ENCODE measurements at regions of chr19 and their contacts with region 1.

Region 1: GRCh38 chr19:40633207-40633606 is 32.0 kb downstream of the LTBP4 start:
- DNase-seq: no peak
- H3K4me3 ChIP-seq: no peak overlapping the region
- H3K27ac ChIP-seq: no peak overlapping the region
- H3K4me1 ChIP-seq: no peaks in the 10 kb centered on the region
- H3K27me3 ChIP-seq: no peaks in the 10 kb centered on the region
- CTCF ChIP-seq: no peak

Region 2: GRCh38 chr19:40190891-40191835 is 442.0 kb before region 1 on chr19 and contains the start of gene MAP3K10:
- CTCF ChIA-PET with region 1: no interaction called
- dilution Hi-C with region 1: no loop called
- in situ Hi-C with region 1: no loop called
- intact Hi-C with region 1: no loop called
- DNase-seq: peak; percentile 45
- H3K4me3 ChIP-seq: peak within 1 kb of the TSS; percentile 70 to 73 (median 72)
- H3K27ac ChIP-seq: peak within 1 kb of the TSS; percentile 24
- H3K4me1 ChIP-seq: peaks cover 9% of the 10 kb centered on the region
- H3K27me3 ChIP-seq: no peaks in the 10 kb centered on the region
- CTCF ChIP-seq: no peak
- total RNA-seq, gene MAP3K10: 7.8 to 16.0 TPM

Region 3: GRCh38 chr19:40348125-40348913 is 284.9 kb before region 1 on chr19 and contains the starts of genes C19orf47 and PLD3:
- CTCF ChIA-PET with region 1: no interaction called
- dilution Hi-C with region 1: no loop called
- in situ Hi-C with region 1: no loop called
- intact Hi-C with region 1: no loop called
- DNase-seq: peak; percentile 99
- H3K4me3 ChIP-seq: peak within 1 kb of the TSS; percentile 78 to 93 (median 86)
- H3K27ac ChIP-seq: peak within 1 kb of the TSS; percentile 74
- H3K4me1 ChIP-seq: peaks cover 9% of the 10 kb centered on the region
- H3K27me3 ChIP-seq: no peaks in the 10 kb centered on the region
- CTCF ChIP-seq: no peak
- total RNA-seq, gene C19orf47: 19.9 to 20.3 TPM
- total RNA-seq, gene PLD3: 146 to 293 TPM

Region 4: GRCh38 chr19:40529093-40529954 is 103.9 kb before region 1 on chr19:
- CTCF ChIA-PET with region 1: interaction called, 4 read pairs
- dilution Hi-C with region 1: no loop called
- in situ Hi-C with region 1: no loop called
- intact Hi-C with region 1: loop called (anchors 1 kb)
- DNase-seq: peak; percentile 64
- H3K4me3 ChIP-seq: peak overlapping the region; percentile 28 to 29 (median 29)
- H3K27ac ChIP-seq: no peak overlapping the region
- H3K4me1 ChIP-seq: peaks cover 3% of the 10 kb centered on the region
- H3K27me3 ChIP-seq: no peaks in the 10 kb centered on the region
- CTCF ChIP-seq: peak; percentile 72 to 96

Region 5: GRCh38 chr19:40542202-40542859 is 90.9 kb before region 1 on chr19:
- CTCF ChIA-PET with region 1: no interaction called
- dilution Hi-C with region 1: no loop called
- in situ Hi-C with region 1: no loop called
- intact Hi-C with region 1: loop called (anchors 1 kb)
- DNase-seq: no peak
- H3K4me3 ChIP-seq: no peak overlapping the region
- H3K27ac ChIP-seq: no peak overlapping the region
- H3K4me1 ChIP-seq: no peaks in the 10 kb centered on the region
- H3K27me3 ChIP-seq: no peaks in the 10 kb centered on the region
- CTCF ChIP-seq: no peak

Region 6: GRCh38 chr19:40603389-40604135 is 29.6 kb before region 1 on chr19:
- CTCF ChIA-PET with region 1: interaction called, 6 read pairs
- dilution Hi-C with region 1: no loop called
- in situ Hi-C with region 1: no loop called
- intact Hi-C with region 1: loop called (anchors 1 kb)
- DNase-seq: peak; percentile 97
- H3K4me3 ChIP-seq: peak overlapping the region; percentile 32 to 50 (median 37)
- H3K27ac ChIP-seq: peak overlapping the region; percentile 39
- H3K4me1 ChIP-seq: peaks cover 50% of the 10 kb centered on the region
- H3K27me3 ChIP-seq: no peaks in the 10 kb centered on the region
- CTCF ChIP-seq: peak in 1 of 2 donors; percentile 32

Region 7: GRCh38 chr19:40614622-40615411 is 18.4 kb before region 1 on chr19:
- CTCF ChIA-PET with region 1: interaction called, 4 read pairs
- dilution Hi-C with region 1: no loop called
- in situ Hi-C with region 1: no loop called
- intact Hi-C with region 1: loop called (anchors 1 kb)
- DNase-seq: peak; percentile 95
- H3K4me3 ChIP-seq: peak overlapping the region; percentile 18 to 53 (median 51)
- H3K27ac ChIP-seq: peak overlapping the region; percentile 48
- H3K4me1 ChIP-seq: peaks cover 50% of the 10 kb centered on the region
- H3K27me3 ChIP-seq: no peaks in the 10 kb centered on the region
- CTCF ChIP-seq: no peak

Region 8: GRCh38 chr19:40807469-40808325 is 174.5 kb after region 1 on chr19:
- CTCF ChIA-PET with region 1: no interaction called
- dilution Hi-C with region 1: no loop called
- in situ Hi-C with region 1: no loop called
- intact Hi-C with region 1: no loop called
- DNase-seq: no peak
- H3K4me3 ChIP-seq: no peak overlapping the region
- H3K27ac ChIP-seq: no peak overlapping the region
- H3K4me1 ChIP-seq: peaks cover 40% of the 10 kb centered on the region
- H3K27me3 ChIP-seq: no peaks in the 10 kb centered on the region
- CTCF ChIP-seq: peak; percentile 24 to 37

Region 9: GRCh38 chr19:40897962-40898361 is 264.8 kb after region 1 on chr19:
- CTCF ChIA-PET with region 1: no interaction called
- dilution Hi-C with region 1: no loop called
- in situ Hi-C with region 1: no loop called
- intact Hi-C with region 1: no loop called
- DNase-seq: no peak
- H3K4me3 ChIP-seq: no peak overlapping the region
- H3K27ac ChIP-seq: no peak overlapping the region
- H3K4me1 ChIP-seq: no peaks in the 10 kb centered on the region
- H3K27me3 ChIP-seq: no peaks in the 10 kb centered on the region
- CTCF ChIP-seq: no peak